ENCODE measurements at regions of chr1 and their contacts with region 1.

Region 1: DNA sequence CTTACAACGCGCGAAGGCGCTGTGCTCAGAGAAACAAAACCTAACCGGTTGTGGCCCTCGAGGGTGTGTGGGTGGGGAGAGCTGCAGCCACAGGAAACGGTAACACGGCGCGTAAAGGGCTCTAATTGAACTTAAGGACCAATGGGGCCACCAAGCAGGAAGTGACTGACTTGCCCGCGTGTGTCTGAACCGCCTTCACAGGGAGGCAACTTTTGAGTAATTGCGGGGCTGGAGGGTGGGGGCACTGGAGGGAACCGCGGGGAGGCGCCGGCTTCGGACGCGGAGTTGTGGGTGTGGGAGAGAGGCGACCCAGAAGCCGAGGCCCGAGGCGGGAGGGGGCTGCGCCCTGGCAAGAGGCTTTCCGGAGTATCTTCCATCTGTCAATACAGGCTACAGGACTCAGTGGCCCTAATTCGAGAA is 577 bp upstream of the PNRC2 start:
- DNase-seq: peak; percentile 97
- ATAC-seq: peak; percentile 73
- H3K4me3 ChIP-seq: peak overlapping the region; percentile 63 to 98 (median 97)
- H3K4me3 Mint-ChIP-seq: peak overlapping the region; percentile 100
- H3K27ac ChIP-seq: peak overlapping the region; percentile 93 to 98
- H3K27ac Mint-ChIP-seq: peak overlapping the region; percentile 100
- H3K4me1 ChIP-seq: peaks cover 51 to 57% of the 10 kb centered on the region in 2 donors
- H3K4me1 Mint-ChIP-seq: peaks cover 70% of the 10 kb centered on the region
- H3K27me3 ChIP-seq: no peaks in the 10 kb centered on the region
- H3K27me3 Mint-ChIP-seq: no peaks in the 10 kb centered on the region
- CTCF ChIP-seq: peak; percentile 1

Region 2: GRCh38 chr1:23908493-23909341 is 50.3 kb before region 1 on chr1:
- CTCF ChIA-PET with region 1: interaction called, 7 read pairs
- POLR2A ChIA-PET with region 1: interaction called, 10 read pairs
- intact Hi-C with region 1: loop called (anchors 1 kb)
- DNase-seq: peak; percentile 80
- ATAC-seq: peak; percentile 58
- H3K4me3 ChIP-seq: peak overlapping the region; percentile 53 to 94 (median 77)
- H3K4me3 Mint-ChIP-seq: peak overlapping the region; percentile 99
- H3K27ac ChIP-seq: peak overlapping the region; percentile 83 to 93
- H3K27ac Mint-ChIP-seq: peak overlapping the region; percentile 99
- H3K4me1 ChIP-seq: peaks cover 77 to 91% of the 10 kb centered on the region in 2 donors
- H3K4me1 Mint-ChIP-seq: peaks cover 86% of the 10 kb centered on the region
- H3K27me3 ChIP-seq: no peaks in the 10 kb centered on the region
- H3K27me3 Mint-ChIP-seq: no peaks in the 10 kb centered on the region
- CTCF ChIP-seq: no peak

Region 3: DNA sequence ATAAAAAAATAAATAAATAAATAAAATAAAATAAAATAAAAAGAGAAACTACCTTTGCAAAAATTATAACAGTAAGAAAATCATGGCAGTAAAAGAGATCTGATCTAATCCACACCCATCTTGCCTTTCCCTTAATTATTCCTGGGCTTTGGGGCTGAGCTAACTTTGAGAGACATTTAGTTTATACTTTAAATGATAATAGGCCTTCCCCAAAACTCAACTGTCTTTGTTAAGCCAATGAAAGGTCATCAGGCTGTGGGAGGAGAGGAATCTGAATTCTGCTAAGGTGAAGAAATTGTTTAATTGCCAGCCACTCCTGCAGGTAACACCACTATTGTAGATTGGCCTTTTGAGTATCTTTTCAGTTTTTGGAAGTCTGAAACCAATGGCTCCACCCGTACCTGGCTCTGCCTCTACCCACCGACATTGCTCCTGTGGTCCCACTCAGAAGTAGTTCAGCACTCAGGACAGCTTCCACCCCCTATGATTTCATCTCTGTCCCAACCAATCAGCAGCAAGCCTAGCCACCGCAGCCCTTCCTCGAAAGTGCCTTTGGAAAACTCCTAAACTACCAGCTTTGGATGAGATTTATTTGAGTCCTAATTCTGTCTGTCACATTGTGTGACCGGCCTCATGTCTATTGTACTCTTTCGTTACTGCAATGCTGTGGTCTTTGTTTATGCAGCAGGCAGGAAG is 22.4 kb before region 1 on chr1:
- CTCF ChIA-PET with region 1: interaction called, 34 read pairs
- POLR2A ChIA-PET with region 1: interaction called, 36 read pairs
- intact Hi-C with region 1: loop called (anchors 1 kb)
- DNase-seq: no peak
- ATAC-seq: no peak
- H3K4me3 ChIP-seq: no peak overlapping the region
- H3K4me3 Mint-ChIP-seq: no peak overlapping the region
- H3K27ac ChIP-seq: no peak overlapping the region
- H3K27ac Mint-ChIP-seq: peak overlapping the region; percentile 2
- H3K4me1 ChIP-seq: peaks cover 9 to 20% of the 10 kb centered on the region in 2 donors
- H3K4me1 Mint-ChIP-seq: peaks cover 22% of the 10 kb centered on the region
- H3K27me3 ChIP-seq: no peaks in the 10 kb centered on the region
- H3K27me3 Mint-ChIP-seq: no peaks in the 10 kb centered on the region
- CTCF ChIP-seq: no peak

Region 4: DNA sequence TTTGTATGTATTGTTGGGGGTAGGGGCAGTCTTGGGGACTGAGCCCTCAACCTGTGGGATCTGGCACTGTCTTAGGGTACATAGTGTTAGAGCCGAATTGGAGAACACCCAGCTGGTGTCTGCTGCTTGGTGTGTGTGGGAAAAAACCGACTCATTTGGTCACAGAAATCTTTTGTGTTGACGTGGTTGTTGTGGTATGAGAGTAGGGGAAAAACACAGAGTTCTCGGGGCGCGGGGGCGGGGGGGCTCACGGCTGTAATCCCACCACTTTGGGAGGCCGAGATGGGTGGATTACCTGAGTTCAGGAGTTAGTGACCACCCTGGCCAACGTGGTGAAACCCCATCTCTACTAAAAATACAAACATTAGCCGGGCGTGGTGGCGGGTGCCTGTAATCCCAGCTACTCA is 36.4 kb after region 1 on chr1:
- CTCF ChIA-PET with region 1: no interaction called
- POLR2A ChIA-PET with region 1: no interaction called
- intact Hi-C with region 1: no loop called
- DNase-seq: no peak
- ATAC-seq: no peak
- H3K4me3 ChIP-seq: no peak overlapping the region
- H3K4me3 Mint-ChIP-seq: no peak overlapping the region
- H3K27ac ChIP-seq: no peak overlapping the region
- H3K27ac Mint-ChIP-seq: no peak overlapping the region
- H3K4me1 ChIP-seq: no peaks in the 10 kb centered on the region
- H3K4me1 Mint-ChIP-seq: peaks cover 10% of the 10 kb centered on the region
- H3K27me3 ChIP-seq: no peaks in the 10 kb centered on the region
- H3K27me3 Mint-ChIP-seq: no peaks in the 10 kb centered on the region
- CTCF ChIP-seq: no peak

Region 5: GRCh38 chr1:24027838-24028468 is 68.9 kb after region 1 on chr1:
- CTCF ChIA-PET with region 1: interaction called, 11 read pairs
- POLR2A ChIA-PET with region 1: no interaction called
- intact Hi-C with region 1: no loop called
- DNase-seq: peak; percentile 37
- ATAC-seq: no peak
- H3K4me3 ChIP-seq: no peak overlapping the region
- H3K4me3 Mint-ChIP-seq: no peak overlapping the region
- H3K27ac ChIP-seq: no peak overlapping the region
- H3K27ac Mint-ChIP-seq: no peak overlapping the region
- H3K4me1 ChIP-seq: no peaks in the 10 kb centered on the region
- H3K4me1 Mint-ChIP-seq: peaks cover 5% of the 10 kb centered on the region
- H3K27me3 ChIP-seq: no peaks in the 10 kb centered on the region
- H3K27me3 Mint-ChIP-seq: no peaks in the 10 kb centered on the region
- CTCF ChIP-seq: peak; percentile 50

Region 6: GRCh38 chr1:24308365-24309015 is 349.4 kb after region 1 on chr1:
- CTCF ChIA-PET with region 1: no interaction called
- POLR2A ChIA-PET with region 1: no interaction called
- intact Hi-C with region 1: no loop called
- DNase-seq: no peak
- ATAC-seq: no peak
- H3K4me3 ChIP-seq: no peak overlapping the region
- H3K4me3 Mint-ChIP-seq: no peak overlapping the region
- H3K27ac ChIP-seq: no peak overlapping the region
- H3K27ac Mint-ChIP-seq: no peak overlapping the region
- H3K4me1 ChIP-seq: no peaks in the 10 kb centered on the region
- H3K4me1 Mint-ChIP-seq: no peaks in the 10 kb centered on the region
- H3K27me3 ChIP-seq: peaks cover 0 to 10% (median 2%) of the 10 kb centered on the region in 4 experiments
- H3K27me3 Mint-ChIP-seq: peaks cover 27% of the 10 kb centered on the region
- CTCF ChIP-seq: no peak

Measured in B cell (primary cell).